Mammary epithelial cell (primary cell): ENCODE measurements at regions of chr3 and their contacts with region 1.

Region 1: DNA sequence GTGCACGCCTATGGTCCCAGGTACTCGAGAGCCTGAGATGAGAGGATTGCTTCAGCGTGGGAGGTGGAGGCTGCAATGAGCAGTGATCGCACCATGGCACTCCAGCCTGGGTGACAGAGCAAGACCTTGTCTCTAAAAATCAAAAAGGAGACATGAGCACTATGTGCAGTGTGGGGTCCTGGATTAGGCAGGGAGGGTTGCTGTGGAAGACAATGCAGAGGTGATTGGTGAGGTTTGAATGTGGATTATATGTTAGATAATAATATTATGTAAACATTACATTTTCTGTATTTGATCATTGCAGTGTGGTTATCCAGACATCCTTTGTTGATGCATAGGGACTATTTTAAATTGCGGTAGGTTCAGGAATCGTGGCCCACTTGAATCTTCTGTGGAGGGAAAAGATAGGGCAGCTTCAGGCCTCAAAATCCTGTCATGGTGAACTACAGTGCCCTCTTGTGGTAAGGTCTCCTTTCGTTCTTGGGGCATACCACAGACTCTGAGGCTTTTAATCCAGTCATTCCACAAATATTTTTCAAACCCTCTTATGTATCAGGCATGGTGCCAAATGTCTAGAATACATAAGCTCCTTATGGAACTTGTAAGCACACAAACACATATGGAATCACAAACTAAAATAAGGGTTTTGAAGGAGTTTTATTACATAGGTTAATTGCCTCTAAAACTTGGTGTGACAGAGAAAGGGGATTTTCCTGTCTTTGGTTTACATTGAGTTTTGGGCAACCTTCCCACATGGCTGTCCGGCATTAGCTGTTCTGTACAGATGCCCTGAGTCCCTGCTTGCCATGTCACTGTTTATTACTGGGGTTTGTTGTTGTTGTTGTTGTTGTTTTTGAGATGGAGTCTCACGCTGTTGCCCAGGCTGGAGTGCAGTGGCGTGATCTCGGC is 37.7 kb downstream of the GPD1L start:
- DNase-seq: peak; percentile 82
- H3K4me3 ChIP-seq: no peak overlapping the region
- H3K27ac ChIP-seq: no peak overlapping the region
- H3K4me1 ChIP-seq: peaks cover 13% of the 10 kb centered on the region
- H3K27me3 ChIP-seq: no peaks in the 10 kb centered on the region
- CTCF ChIP-seq: peak; percentile 78 to 81

Region 2: DNA sequence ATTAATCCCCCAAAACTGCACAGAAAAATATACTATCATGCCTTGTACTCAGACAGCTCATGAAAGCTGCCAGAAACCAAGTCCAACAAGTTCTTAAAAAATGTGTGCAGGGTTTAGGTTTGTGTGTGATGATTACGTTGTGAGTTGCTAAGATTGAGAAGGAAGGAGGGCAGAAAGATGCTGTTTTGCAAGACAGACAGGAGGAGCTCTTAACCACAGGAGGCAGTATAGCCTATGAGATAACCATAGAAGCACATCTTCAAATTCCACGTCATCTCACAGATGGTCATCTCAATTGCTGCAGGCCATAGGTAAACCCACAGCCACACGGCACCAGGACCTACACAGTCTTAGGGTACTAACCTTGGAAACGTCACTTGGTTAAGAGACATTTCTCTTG is 419.4 kb before region 1 on chr3:
- CTCF ChIA-PET with region 1: no interaction called
- dilution Hi-C with region 1: no loop called
- in situ Hi-C with region 1: no loop called
- intact Hi-C with region 1: loop called (anchors 1 kb)
- DNase-seq: peak; percentile 27
- H3K4me3 ChIP-seq: no peak overlapping the region
- H3K27ac ChIP-seq: no peak overlapping the region
- H3K4me1 ChIP-seq: no peaks in the 10 kb centered on the region
- H3K27me3 ChIP-seq: no peaks in the 10 kb centered on the region
- CTCF ChIP-seq: peak; percentile 46 to 58

Region 3: DNA sequence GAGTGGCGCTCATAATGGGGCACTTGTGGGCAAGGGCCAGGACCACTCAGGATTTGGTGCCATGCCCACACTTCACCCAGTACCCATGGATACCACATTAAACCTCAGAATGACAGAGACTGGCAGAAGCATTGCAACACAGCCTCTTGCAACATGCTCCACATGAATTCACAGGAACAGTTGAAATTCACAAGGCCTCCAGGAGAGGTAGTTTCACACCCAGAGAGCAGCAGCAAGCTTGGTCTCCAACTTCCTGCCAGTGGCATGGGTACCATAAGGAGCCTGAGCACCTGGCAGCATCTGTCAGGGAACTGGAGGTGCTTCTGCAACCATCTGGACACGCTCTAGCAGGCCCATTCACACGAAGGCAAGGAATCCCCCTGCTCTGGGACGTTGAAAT is 264.1 kb before region 1 on chr3:
- CTCF ChIA-PET with region 1: no interaction called
- dilution Hi-C with region 1: no loop called
- in situ Hi-C with region 1: no loop called
- intact Hi-C with region 1: loop called (anchors 5 kb)
- DNase-seq: peak; percentile 79
- H3K4me3 ChIP-seq: no peak overlapping the region
- H3K27ac ChIP-seq: peak overlapping the region; percentile 38
- H3K4me1 ChIP-seq: peaks cover 55% of the 10 kb centered on the region
- H3K27me3 ChIP-seq: no peaks in the 10 kb centered on the region
- CTCF ChIP-seq: peak; percentile 36 to 64

Region 4: DNA sequence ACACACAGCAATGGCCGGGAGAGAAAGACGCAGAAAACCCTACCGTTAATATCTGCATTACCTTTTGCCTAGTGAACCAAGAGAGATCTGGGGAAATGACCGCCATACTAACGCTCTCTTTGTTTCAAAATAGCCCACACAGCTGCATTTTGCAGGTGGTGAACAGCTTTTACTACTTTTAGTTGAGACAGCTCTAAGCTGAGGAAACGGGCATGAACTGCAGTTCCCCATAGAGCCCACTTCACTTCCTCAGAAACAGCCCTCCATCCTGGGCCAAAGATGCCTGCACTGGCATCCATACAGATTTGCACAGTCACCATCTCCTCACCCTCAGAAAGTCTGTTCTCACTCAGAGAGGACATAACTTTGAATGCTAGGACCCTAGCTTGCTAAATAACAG is 117.5 kb before region 1 on chr3:
- CTCF ChIA-PET with region 1: no interaction called
- dilution Hi-C with region 1: no loop called
- in situ Hi-C with region 1: loop called (anchors 10 to 25 kb)
- intact Hi-C with region 1: no loop called
- DNase-seq: no peak
- H3K4me3 ChIP-seq: no peak overlapping the region
- H3K27ac ChIP-seq: no peak overlapping the region
- H3K4me1 ChIP-seq: no peaks in the 10 kb centered on the region
- H3K27me3 ChIP-seq: no peaks in the 10 kb centered on the region
- CTCF ChIP-seq: no peak

Region 5: GRCh38 chr3:32603064-32603463 is 459.0 kb after region 1 on chr3:
- CTCF ChIA-PET with region 1: no interaction called
- dilution Hi-C with region 1: no loop called
- in situ Hi-C with region 1: no loop called
- intact Hi-C with region 1: no loop called
- DNase-seq: no peak
- H3K4me3 ChIP-seq: no peak overlapping the region
- H3K27ac ChIP-seq: no peak overlapping the region
- H3K4me1 ChIP-seq: no peaks in the 10 kb centered on the region
- H3K27me3 ChIP-seq: no peaks in the 10 kb centered on the region
- CTCF ChIP-seq: no peak